ENCODE measurements at regions of chr12 and their contacts with region 1.

Region 1: DNA sequence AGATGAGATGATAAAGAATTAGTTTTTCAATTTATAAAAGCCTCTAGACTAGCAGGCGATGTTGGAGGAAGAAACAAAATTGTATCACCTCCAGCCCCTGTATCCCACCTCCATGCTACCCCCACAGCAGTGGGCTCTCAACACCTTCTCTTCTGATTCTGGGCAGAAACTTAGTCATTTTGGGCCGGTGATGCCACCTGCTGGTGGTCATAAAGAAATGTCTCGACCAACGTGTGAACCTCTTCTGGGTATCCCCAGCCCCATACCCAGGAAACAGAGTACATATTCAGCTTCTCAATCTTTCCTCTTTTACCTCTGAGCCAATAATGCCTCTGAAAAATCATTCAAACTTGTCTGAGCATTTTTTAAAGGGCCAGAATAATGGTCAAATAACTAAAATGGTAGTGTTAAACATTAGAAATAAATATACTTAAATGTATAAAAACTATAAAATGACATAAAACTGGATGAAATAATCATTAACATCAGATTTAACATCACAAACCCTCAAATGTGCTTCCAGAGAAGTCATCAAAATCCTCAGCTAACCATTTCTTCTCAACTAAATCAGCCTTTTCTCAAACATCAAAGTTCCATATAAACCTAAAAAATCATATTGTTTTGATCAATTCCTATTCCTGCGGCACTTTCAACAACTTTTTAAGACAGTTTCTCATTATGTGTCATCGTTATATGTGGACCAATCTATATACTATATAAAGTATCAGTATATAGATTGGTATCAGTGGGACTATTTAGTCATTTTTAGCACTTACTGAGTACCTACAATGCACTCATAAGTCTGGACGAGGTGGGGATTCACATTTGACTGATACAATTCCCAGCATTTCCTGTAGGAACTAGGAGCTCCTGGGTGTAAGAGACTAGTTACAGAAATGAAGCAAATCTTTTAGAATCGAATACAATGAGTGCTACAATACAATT is 69.4 kb downstream of the ATXN2 start:
- DNase-seq: no peak
- H3K4me3 ChIP-seq: no peak overlapping the region
- H3K27ac ChIP-seq: no peak overlapping the region
- H3K4me1 ChIP-seq: no peaks in the 10 kb centered on the region
- H3K27me3 ChIP-seq: no peaks in the 10 kb centered on the region
- CTCF ChIP-seq: peak; percentile 53 to 63 (median 59)
- EP300 ChIP-seq: no peak
- POLR2A ChIP-seq: no peak

Region 2: GRCh38 chr12:111444925-111445725 is 84.6 kb before region 1 on chr12:
- intact Hi-C with region 1: no loop called
- DNase-seq: peak; percentile 92
- H3K4me3 ChIP-seq: no peak overlapping the region
- H3K27ac ChIP-seq: peak overlapping the region; percentile 59 to 70 (median 62)
- H3K4me1 ChIP-seq: peaks cover 69 to 95% (median 89%) of the 10 kb centered on the region in 4 donors
- H3K27me3 ChIP-seq: no peaks in the 10 kb centered on the region
- CTCF ChIP-seq: no peak
- EP300 ChIP-seq: no peak
- POLR2A ChIP-seq: no peak

Region 3: GRCh38 chr12:111607239-111607638 is 77.5 kb after region 1 on chr12:
- intact Hi-C with region 1: no loop called
- DNase-seq: no peak
- H3K4me3 ChIP-seq: no peak overlapping the region
- H3K27ac ChIP-seq: no peak overlapping the region
- H3K4me1 ChIP-seq: no peaks in the 10 kb centered on the region
- H3K27me3 ChIP-seq: no peaks in the 10 kb centered on the region
- CTCF ChIP-seq: no peak
- EP300 ChIP-seq: no peak
- POLR2A ChIP-seq: no peak

Region 4: GRCh38 chr12:111685744-111686517 is 156.2 kb after region 1 on chr12 and contains the starts of genes ACAD10 and BRAP:
- intact Hi-C with region 1: loop called (anchors 10 kb)
- DNase-seq: peak; percentile 97
- H3K4me3 ChIP-seq: peak within 1 kb of the TSS; percentile 73 to 98 (median 91)
- H3K27ac ChIP-seq: peak within 1 kb of the TSS; percentile 80 to 91 (median 86)
- H3K4me1 ChIP-seq: peaks cover 25 to 38% (median 31%) of the 10 kb centered on the region in 4 donors
- H3K27me3 ChIP-seq: no peaks in the 10 kb centered on the region
- CTCF ChIP-seq: peak in 1 of 3 experiments; percentile 29
- EP300 ChIP-seq: no peak
- POLR2A ChIP-seq: peak; percentile 16
- total RNA-seq, gene ACAD10: 8.8 to 21.6 (median 16.8) TPM
- total RNA-seq, gene BRAP: 17.4 to 23.8 (median 20.7) TPM

Region 5: DNA sequence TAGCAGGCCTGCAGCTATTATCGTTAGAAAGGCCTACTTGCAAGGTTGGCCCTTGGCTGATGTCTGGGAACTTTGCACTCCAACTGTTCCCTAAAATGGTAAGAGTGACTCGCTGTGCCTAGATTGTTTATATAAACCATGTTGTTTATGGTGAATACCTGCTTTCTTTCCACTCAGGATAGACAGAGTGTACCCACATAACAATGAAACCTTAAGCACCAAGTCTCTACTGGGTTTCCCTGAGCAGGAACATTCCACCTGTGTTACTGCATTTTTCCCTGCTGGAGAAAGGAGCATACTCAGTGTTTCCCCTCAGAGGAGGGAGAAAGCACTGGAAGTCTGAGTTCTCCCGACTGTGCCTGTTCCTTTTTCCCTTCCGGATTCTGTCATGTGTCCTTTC is 516.3 kb after region 1 on chr12:
- intact Hi-C with region 1: no loop called
- DNase-seq: no peak
- H3K4me3 ChIP-seq: no peak overlapping the region
- H3K27ac ChIP-seq: peak overlapping the region; percentile 73 to 83 (median 76)
- H3K4me1 ChIP-seq: peaks cover 0 to 50% (median 39%) of the 10 kb centered on the region in 4 donors
- H3K27me3 ChIP-seq: no peaks in the 10 kb centered on the region
- CTCF ChIP-seq: peak in 1 of 3 experiments; percentile 8
- EP300 ChIP-seq: no peak
- POLR2A ChIP-seq: no peak